ENCODE measurements at regions of chr13 and their contacts with region 1.

Region 1: DNA sequence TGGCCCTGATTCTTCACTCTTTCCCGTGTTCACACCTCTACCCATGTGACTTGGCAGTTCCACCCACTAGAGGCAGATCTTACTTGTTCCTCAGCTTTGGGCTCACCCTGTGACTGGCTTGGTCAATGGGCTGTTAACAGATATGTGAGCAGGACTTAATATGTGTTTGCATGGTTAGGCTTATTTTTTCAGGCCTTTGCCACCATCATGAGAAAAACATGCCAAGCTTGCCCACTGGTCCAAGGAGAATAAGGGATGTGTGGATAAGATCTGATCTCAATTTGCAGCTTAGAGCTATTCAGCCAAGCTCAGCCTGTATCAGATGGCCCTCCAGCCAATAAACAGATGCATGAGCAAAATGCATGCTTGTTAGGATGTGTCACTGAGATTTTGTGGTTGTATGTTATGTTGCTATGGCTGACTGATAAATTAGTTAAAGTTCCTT is 48.0 kb downstream of the RGCC start:
- DNase-seq: no peak

Region 2: DNA sequence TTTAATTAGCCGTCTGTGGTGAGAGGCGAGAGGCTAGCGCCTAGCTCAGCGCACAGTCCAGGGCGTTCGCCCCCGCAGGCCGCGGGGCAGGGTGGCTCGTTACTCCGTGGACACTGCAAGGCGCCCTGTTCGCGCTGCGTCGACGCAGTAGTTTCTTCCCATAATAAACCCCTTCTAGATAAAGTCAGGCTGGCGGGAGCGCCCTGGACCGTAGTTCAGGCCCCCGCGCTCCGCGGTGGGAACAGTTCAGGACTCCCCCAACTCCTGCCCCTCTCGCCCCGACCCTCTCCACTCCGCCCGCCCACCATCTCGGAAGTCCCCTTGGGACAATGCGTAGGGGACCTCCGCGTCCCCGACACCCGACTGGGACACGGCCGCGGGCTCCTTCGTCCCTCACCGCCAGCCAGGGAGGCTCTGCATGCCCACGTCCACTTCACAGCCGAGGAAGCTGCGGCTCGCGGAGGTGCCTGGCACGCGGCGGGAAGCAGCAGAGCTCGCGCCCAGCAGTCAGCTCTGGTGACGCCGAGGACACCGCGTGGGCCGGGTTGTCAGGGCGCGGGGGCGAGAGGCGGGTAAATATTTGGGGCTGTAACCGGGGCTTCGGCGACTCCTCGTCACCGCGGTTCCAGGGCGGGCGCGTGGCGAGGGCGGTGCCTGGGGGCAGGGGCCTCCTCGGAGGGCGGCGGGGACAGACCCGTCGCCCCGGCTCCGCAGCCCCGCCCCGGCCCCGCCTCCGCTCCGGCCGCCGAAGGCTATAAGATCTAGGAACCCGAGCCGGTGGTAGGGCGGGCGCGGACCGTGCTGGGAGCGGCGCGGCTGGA is 48.3 kb before region 1 on chr13 and contains the start of gene RGCC:
- intact Hi-C with region 1: no loop called
- DNase-seq: peak; percentile 96
- total RNA-seq, gene RGCC: 29.6 to 68.3 TPM

Region 3: GRCh38 chr13:41492404-41493260 is 12.7 kb before region 1 on chr13:
- intact Hi-C with region 1: loop called in 1 of 2 experiments (anchors 1 kb)
- DNase-seq: no peak

Region 4: GRCh38 chr13:41639955-41640780 is 134.8 kb after region 1 on chr13:
- intact Hi-C with region 1: loop called in 1 of 2 experiments (anchors 5 kb)
- DNase-seq: no peak

Measured in posterior vena cava (tissue), 2 donors.